ENCODE measurements at regions of chr11 and their contacts with region 1.

Region 1: DNA sequence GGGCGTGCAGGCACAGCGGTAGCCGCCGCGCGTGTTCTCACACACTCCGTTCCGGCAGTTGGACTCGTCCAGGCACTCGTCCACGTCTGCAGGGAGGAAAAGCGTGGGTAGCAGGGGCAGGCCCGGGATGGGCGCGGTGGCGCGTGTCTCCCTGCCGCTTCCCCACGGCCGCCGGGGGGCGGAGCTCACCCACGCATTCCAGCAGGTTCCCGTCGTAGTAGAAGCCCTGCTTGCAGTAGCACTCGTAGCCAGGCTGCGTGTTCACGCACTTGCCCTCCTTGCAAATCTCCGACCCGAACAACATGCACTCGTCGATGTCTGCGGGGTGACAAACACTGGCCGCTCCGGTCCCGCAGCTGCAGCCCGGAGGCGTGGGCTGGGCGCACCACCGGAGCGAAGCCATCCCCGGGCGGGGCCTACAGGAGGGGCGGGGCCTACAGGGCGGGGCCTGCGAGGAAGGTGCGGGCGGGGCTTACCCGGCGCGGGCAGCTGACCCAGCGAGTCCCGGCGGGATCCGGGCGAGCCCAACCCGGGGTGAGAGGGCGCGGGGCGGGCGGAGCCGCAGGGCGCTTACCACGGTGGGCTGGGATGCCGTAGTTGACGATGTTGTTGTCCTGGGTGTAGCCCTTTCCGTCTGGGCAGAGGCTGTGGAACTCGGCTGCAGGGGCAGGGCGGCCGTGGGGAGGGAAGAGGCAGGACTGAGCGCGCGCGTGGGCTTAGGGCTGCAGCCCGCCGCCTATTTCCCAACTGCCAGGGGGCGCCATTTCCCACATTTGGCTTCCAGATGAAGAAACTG is 15.6 kb downstream of the SCYL1 start:
- DNase-seq: peak; percentile 90 to 91
- ATAC-seq: peak; percentile 88 to 95 (median 93)
- H3K4me3 ChIP-seq: peak overlapping the region; percentile 3 to 71 (median 55)
- H3K27ac ChIP-seq: peak overlapping the region; percentile 74 to 94 (median 87)
- H3K4me1 ChIP-seq: peaks cover 11 to 28% (median 21%) of the 10 kb centered on the region in 9 donors
- H3K27me3 ChIP-seq: no peaks in the 10 kb centered on the region
- CTCF ChIP-seq: peak; percentile 70 to 94 (median 85)

Region 2: DNA sequence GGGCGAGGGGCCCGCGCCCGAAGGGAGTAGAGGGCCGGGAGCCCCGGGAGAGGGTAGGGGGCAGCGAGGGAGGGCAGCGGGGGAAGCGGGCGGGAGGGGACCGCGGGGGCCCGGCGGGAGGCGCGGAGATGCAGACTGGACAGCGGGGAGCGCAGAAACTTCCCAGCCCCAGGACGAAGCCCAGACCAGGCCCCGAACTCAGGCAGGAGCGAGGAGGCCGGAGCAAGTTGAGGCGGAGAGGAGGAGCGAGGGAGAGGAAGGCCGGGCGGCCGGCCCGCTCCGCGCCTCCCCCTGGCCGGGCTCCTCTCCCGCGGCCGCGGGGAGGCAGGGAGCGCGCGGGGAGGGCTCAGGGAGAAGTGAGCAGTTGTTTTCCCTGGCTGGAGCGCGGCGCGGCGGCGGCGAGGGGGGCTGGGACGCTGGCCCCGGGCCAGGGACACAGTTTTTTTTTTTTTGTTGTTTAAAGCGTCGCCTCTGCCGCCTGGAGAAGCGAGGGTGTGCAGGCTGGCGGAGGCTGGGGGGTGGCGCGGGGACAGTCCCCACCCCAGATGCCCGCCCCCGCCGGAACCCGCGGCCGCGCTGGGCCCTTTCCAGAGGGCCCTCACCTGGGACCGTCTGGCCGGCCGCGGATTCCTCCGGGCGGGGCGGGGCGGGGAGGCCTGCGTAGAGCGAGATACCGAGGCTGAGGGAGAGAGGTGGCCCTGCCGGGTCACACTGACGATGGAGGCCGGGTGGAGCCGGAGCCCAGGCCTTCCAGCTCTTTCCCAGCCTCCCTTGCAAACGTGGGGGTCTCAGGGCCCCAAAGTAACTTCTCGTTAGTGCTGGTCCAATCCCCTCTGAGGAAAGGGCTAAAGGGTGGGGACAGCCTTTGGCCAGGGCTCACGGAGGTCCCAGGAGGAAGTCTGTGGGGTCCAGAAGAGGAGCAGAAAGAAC is 17.8 kb after region 1 on chr11 and contains the start of gene LTBP3:
- intact Hi-C with region 1: loop called in 2 of 10 experiments (anchors 1 kb)
- DNase-seq: peak; percentile 84 to 87
- ATAC-seq: peak; percentile 76 to 90 (median 82)
- H3K4me3 ChIP-seq: peak within 1 kb of the TSS; percentile 35 to 76 (median 64)
- H3K27ac ChIP-seq: peak within 1 kb of the TSS; percentile 84 to 99 (median 94)
- H3K4me1 ChIP-seq: peaks cover 38 to 75% (median 57%) of the 10 kb centered on the region in 9 donors
- H3K27me3 ChIP-seq: peaks cover 0 to 9% (median 0%) of the 10 kb centered on the region in 7 donors
- CTCF ChIP-seq: peak in 3 of 9 donors; percentile 29 to 35 (median 34)
- total RNA-seq, gene LTBP3: 54.4 to 92.5 (median 72.8) TPM

Region 3: DNA sequence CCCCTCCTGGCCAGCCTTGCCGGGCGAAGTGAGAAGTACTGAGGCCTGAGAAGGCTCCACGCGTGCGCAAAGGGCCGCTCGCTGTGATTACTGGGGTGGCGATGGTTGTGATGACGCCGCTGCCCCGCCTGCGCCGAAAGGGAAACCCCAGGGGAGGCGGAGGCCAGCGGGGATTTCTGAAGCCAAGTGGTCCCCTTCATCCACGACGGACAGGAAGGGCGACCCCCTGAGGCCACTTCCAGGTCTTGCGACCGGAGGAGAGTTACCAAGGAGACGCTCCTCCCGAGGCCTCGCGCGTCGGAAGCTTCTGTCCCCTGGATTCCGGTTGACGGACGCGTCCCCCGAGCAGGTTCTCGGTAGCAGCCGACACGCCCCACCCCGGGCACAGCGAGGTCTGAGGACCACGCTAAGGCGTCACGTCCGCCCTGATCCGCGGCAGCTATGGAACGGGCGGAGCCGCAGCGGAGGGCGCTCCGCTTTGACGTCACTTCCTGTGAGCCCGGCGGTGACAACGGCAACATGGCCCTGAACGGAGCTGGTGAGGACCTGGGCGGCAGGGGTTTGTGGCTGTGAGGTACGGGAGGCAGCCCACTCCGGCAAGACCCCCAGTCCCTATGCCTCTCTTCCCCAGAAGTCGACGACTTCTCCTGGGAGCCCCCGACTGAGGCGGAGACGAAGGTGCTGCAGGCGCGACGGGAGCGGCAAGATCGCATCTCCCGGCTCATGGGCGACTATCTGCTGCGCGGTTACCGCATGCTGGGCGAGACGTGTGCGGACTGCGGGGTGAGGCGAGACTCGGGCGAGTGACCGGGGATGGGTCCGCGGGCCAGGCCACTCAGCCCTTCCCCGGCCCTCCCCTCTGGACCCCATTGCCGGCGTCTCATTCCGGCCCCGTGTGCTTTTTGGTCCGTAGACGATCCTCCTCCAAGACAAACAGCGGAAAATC is 29.8 kb after region 1 on chr11 and contains the start of gene ZNRD2:
- intact Hi-C with region 1: loop called in 7 of 10 experiments (anchors 1 to 5 kb)
- DNase-seq: peak; percentile 97 to 98
- ATAC-seq: peak; percentile 85 to 92 (median 90)
- H3K4me3 ChIP-seq: peak within 1 kb of the TSS; percentile 54 to 98 (median 86)
- H3K27ac ChIP-seq: peak within 1 kb of the TSS; percentile 73 to 98 (median 94)
- H3K4me1 ChIP-seq: peaks cover 24 to 76% (median 59%) of the 10 kb centered on the region in 9 donors
- H3K27me3 ChIP-seq: no peaks in the 10 kb centered on the region
- CTCF ChIP-seq: peak in 8 of 9 donors; percentile 39 to 73 (median 62)
- total RNA-seq, gene ZNRD2: 23.7 to 44.0 (median 26.3) TPM

Region 4: DNA sequence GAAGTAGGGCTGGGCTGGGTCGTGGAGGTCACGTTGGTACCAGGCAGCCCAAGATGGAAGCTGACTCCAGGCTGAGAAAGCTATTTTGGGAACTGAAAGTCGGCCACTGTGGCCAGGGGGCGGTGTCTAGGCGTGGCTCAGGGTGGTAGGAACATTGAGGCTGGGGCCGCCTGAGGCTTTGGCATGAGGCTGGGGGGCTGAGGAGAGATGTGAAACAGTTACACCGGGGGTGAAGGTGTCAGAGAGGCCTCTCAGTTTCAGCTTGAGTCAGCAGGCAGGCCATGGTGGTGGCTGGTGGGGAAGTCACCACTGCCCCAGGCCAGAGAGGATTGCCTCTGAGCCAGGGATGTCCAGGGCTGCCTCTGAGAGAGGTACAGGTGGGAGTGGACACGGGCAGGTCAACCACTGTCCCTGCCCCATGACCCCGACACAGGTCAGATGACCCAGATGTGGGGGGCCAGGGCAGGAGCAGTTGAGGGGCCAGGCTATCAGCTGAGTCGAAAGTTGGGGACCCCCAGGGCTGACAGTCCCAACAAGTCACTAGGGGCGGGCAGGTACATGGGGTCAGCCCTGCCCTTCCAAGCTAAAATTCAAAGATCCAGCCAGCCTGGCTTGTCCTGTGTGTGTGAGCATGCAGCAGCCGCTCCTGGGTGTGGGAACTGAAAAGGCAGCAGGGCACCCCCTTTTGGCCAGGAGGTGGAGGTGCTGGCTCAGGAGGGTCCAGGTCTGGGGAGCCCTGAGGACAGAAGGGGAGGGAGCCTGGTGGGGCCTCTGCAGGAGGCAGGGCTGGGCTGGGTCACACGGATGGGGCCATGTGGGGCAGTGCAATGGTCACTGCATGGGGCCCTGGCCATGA is 47.9 kb after region 1 on chr11:
- intact Hi-C with region 1: loop called in 7 of 10 experiments (anchors 2 to 10 kb)
- DNase-seq: peak; percentile 61 to 63
- ATAC-seq: peak; percentile 34 to 75 (median 64)
- H3K4me3 ChIP-seq: peak overlapping the region in 1 of 10 donors; percentile 12
- H3K27ac ChIP-seq: peak overlapping the region; percentile 37 to 89 (median 80)
- H3K4me1 ChIP-seq: peaks cover 26 to 70% (median 49%) of the 10 kb centered on the region in 9 donors
- H3K27me3 ChIP-seq: no peaks in the 10 kb centered on the region
- CTCF ChIP-seq: peak; percentile 17 to 67 (median 51)

Region 5: DNA sequence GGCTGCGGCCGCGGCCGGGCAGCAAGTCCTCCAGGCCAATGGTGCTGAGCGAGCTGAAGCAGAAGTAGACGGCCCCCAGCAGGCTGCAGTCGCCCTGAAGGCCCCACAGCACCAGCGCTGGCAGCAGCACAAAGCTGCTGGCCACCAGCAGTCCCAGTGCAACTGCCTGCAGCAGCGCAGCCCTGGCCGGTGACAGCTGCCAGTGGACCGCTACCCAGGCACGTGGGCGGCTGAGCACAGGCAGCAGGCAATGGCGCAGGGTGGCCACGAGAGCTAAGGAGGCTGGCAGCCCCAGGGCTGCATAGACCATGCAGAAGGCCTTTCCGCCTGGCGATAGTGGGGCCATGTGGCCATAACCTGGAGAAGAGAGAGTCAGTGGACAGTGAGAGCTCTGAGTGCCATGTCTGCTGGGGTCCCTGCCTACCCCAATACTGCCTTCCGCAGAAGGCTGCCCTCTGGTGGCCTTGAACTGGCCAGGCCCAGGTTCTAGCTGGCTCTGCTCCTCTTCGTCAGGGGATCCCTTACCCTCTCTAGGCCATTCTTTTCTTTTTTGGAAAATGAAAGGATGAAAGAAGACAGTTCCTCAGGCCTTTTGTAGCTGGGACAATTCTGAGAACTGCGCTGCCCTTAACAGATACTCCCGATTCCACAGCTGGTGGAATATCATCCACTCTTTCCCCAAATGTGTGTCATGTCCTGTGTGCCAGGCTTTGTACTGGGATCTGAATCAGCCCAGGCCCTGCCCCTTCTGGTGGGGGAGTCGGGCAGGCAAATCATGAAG is 53.2 kb after region 1 on chr11:
- intact Hi-C with region 1: loop called in 7 of 10 experiments (anchors 2 to 10 kb)
- DNase-seq: peak in 1 of 2 donors; percentile 50
- ATAC-seq: peak in 7 of 8 donors; percentile 28 to 50 (median 43)
- H3K4me3 ChIP-seq: no peak overlapping the region
- H3K27ac ChIP-seq: peak overlapping the region in 3 of 10 donors; percentile 19 to 39 (median 26)
- H3K4me1 ChIP-seq: peaks cover 12 to 58% (median 32%) of the 10 kb centered on the region in 9 donors
- H3K27me3 ChIP-seq: no peaks in the 10 kb centered on the region
- CTCF ChIP-seq: peak; percentile 49 to 80 (median 70)

Region 6: DNA sequence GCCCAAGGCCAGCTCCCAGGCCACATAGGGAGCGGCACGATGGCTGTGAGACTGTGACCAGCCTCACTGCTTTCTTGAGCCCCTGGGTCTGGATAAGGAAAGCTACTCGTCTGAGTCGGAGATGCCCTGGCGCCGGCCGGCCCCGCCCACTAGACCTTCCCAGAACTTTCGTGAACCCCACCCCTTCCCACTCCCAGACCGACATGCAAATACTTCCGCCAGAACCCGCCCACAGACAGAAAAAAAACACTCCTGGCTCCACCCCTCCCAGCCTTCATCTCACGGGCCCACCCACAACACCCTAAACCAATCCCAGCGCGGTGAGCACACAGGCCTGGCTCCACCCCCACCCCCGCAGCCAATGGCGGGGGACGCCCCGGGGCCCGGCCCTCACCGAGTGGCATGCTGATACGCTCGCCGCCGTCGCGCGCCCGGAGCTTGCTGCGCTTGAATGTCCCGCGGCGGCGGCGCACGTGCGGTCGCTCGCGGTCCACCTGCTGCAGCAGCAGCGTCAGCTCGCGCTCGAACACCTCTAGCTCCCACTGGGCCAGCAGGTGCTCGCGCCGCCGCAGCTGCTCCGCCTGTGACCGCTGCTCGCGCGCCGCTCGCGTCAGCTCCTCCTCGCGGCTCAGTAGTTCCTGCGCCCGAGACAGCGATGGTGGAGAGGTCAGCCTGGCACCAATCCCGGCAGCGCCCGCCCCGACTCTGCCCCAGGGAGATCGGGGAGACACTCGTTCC is 66.5 kb after region 1 on chr11:
- intact Hi-C with region 1: loop called in 3 of 10 experiments (anchors 2 to 5 kb)
- DNase-seq: peak; percentile 93 to 96
- ATAC-seq: peak; percentile 92 to 96 (median 94)
- H3K4me3 ChIP-seq: peak overlapping the region in 9 of 10 donors; percentile 12 to 49 (median 42)
- H3K27ac ChIP-seq: peak overlapping the region in 9 of 10 donors; percentile 39 to 90 (median 82)
- H3K4me1 ChIP-seq: peaks cover 27 to 73% (median 47%) of the 10 kb centered on the region in 9 donors
- H3K27me3 ChIP-seq: no peaks in the 10 kb centered on the region
- CTCF ChIP-seq: peak in 1 of 9 donors; percentile 16

Region 7: GRCh38 chr11:65615229-65615941 is 74.9 kb after region 1 on chr11 and contains the start of gene PCNX3:
- intact Hi-C with region 1: loop called in 3 of 10 experiments (anchors 2 to 5 kb)
- DNase-seq: peak; percentile 100
- ATAC-seq: peak; percentile 79 to 91 (median 86)
- H3K4me3 ChIP-seq: peak within 1 kb of the TSS; percentile 91 to 99 (median 97)
- H3K27ac ChIP-seq: peak within 1 kb of the TSS; percentile 92 to 100 (median 98)
- H3K4me1 ChIP-seq: peaks cover 28 to 50% (median 43%) of the 10 kb centered on the region in 9 donors
- H3K27me3 ChIP-seq: no peaks in the 10 kb centered on the region
- CTCF ChIP-seq: no peak
- total RNA-seq, gene PCNX3: 9.4 to 16.9 (median 11.7) TPM

Measured in heart right ventricle (tissue), 16 donors.